ENCODE measurements at regions of chr6 and their contacts with region 1.

Region 1: DNA sequence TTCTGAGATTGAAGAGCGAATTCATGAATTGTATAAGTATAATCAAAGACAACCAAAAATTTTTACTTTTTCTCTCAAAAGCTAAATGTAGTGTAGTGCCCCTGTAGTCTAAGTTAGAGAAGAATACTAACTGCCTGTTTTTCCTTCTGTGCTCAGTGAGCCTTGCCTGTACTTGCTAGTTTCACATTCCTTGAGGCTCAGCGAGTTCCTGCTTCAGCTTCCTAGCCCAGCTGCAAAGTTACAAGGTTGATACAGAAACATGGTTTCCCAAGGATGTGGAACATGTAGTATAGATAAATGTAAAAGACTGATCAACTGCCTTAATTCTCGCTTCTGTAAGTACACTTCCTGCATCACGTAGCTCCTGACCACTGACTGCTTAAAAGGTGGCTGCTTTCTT is 33.1 kb upstream of the SEC63 start:
- DNase-seq: no peak
- ATAC-seq: no peak
- H3K4me3 ChIP-seq: no peak overlapping the region
- H3K27ac ChIP-seq: no peak overlapping the region
- H3K4me1 ChIP-seq: no peaks in the 10 kb centered on the region
- H3K27me3 ChIP-seq: no peaks in the 10 kb centered on the region
- CTCF ChIP-seq: no peak
- EP300 ChIP-seq: no peak
- POLR2A ChIP-seq: no peak
- RAD21 ChIP-seq: no peak

Region 2: DNA sequence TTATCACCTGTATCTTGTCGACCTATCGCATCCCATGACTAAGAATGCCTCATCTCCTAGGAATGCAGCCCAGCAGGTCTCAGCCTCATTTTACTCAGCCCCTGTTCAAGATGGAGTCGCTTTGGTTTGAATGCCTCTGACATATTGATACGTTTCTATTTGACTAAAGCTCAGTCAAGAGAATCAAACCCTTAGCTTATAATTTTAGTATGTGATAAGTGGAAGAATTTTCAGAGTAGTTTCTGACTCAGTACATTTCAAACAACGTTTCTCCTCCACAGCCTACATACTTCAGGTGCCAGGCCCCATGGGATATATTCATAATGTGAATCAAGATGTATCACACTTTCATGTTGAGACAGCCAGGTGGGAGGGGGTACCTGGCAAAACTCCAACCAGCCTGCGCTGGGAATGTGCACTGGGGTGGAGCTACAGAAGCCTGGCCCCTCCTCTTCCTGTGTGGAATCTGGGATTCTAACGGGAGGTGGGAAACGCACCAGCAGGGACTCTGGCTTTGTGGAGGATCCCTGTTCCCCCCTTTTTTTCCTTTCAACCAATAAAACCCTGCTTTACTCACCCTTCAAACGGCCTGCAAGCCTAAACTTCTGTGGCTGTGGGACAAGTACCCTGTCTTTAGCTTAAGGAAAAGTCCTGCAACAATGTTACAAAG is 26.3 kb before region 1 on chr6:
- CTCF ChIA-PET with region 1: no interaction called
- POLR2A ChIA-PET with region 1: no interaction called
- in situ Hi-C with region 1: no loop called
- intact Hi-C with region 1: loop called (anchors 2 kb)
- DNase-seq: peak; percentile 56
- ATAC-seq: peak; percentile 86
- H3K4me3 ChIP-seq: peak overlapping the region; percentile 34 to 51 (median 46)
- H3K27ac ChIP-seq: peak overlapping the region; percentile 53
- H3K4me1 ChIP-seq: peaks cover 37% of the 10 kb centered on the region
- H3K27me3 ChIP-seq: no peaks in the 10 kb centered on the region; a peak in 1 of 5 replicates
- CTCF ChIP-seq: no peak
- EP300 ChIP-seq: no peak
- POLR2A ChIP-seq: peak; percentile 24 to 59; a peak in 1 of 4 replicates
- RAD21 ChIP-seq: no peak

Region 3: GRCh38 chr6:108243836-108244235 is 252.8 kb after region 1 on chr6:
- CTCF ChIA-PET with region 1: no interaction called
- POLR2A ChIA-PET with region 1: no interaction called
- in situ Hi-C with region 1: no loop called
- intact Hi-C with region 1: no loop called
- DNase-seq: no peak
- ATAC-seq: no peak
- H3K4me3 ChIP-seq: no peak overlapping the region
- H3K27ac ChIP-seq: no peak overlapping the region
- H3K4me1 ChIP-seq: peaks cover 25% of the 10 kb centered on the region
- H3K27me3 ChIP-seq: no peaks in the 10 kb centered on the region
- CTCF ChIP-seq: no peak
- EP300 ChIP-seq: no peak
- POLR2A ChIP-seq: no peak
- RAD21 ChIP-seq: no peak

Region 4: DNA sequence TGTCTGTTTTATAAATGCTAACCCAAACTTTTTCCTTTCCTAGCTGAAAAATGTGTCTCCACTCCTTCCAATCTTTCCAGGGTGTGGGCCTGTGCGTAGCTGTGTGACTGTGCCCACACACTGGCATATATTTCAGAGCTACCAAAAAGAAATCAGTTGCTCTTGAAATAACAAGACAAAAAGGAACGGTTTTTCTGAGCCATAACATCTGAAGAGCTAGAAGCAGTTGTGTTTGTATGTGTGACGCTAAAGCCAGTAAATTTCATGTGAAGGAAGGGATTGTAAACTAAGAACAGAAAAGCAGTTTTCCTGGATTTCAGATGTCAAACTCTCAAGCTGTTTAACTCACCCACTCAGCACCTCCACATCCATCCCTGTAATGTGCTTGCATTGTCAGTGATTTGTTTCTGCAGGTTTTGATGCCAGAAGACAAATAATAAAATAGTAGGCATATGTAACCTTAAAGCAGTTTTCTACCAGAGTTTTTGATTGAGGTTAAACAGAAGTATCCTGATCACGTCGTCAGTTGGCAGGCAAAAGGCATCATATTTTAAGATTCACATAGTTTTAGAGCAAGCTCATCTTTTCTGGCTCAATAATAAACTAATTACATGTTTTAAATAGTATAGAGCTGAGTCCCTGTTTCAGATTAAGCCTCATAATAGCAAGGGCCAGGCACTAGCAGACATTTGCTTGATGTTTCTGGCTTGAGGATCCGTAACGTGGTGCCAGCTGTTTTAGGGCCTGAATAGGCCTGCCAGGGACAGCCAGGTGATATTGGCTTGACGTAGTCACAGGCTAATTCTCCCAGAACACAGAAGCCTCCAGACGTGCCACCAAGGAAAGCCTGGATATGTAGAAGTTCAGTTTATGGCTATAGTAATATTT is 660.5 kb after region 1 on chr6:
- CTCF ChIA-PET with region 1: no interaction called
- POLR2A ChIA-PET with region 1: no interaction called
- in situ Hi-C with region 1: no loop called
- intact Hi-C with region 1: no loop called
- DNase-seq: no peak
- ATAC-seq: no peak
- H3K4me3 ChIP-seq: no peak overlapping the region
- H3K27ac ChIP-seq: no peak overlapping the region
- H3K4me1 ChIP-seq: peaks cover 50% of the 10 kb centered on the region
- H3K27me3 ChIP-seq: no peaks in the 10 kb centered on the region
- CTCF ChIP-seq: no peak
- EP300 ChIP-seq: no peak
- POLR2A ChIP-seq: no peak
- RAD21 ChIP-seq: no peak